SK-N-SH (cell line): ENCODE measurements at regions of chr5 and their contacts with region 1.

Region 1: DNA sequence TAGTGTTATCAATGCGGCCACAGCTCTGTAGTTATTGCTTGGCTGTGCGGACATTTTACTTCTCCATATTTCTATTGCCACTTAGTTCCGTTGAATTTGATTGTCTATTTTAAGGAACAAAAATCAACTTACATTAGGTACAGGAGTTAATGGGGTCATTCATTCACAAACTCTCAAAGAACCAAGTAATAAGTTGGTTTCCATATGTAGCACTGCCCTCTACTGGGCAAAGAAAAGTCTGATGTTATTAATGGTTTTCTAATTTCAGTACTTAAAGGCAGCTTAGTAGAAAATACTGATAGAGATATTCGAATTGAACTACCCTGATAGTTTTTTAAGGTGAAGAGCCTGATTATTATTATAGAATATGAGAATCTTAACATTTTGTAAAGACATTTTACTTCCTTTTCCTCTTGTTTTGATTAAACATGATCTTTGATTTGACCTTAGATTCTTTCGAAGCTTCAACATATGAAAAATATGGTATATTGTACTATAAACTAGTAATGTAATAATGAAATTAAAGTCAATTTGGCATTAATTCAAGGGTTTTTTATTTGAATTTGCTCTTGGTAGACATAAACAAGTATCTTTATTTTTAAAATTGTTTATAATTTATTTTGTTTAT is 119.5 kb upstream of the CTNND2 start:
- DNase-seq: peak; percentile 6
- H3K4me3 ChIP-seq: no peak overlapping the region
- H3K27ac ChIP-seq: no peak overlapping the region
- H3K4me1 ChIP-seq: no peaks in the 10 kb centered on the region
- H3K27me3 ChIP-seq: no peaks in the 10 kb centered on the region
- CTCF ChIP-seq: peak; percentile 81
- EP300 ChIP-seq: no peak
- RAD21 ChIP-seq: peak; percentile 61

Region 2: GRCh38 chr5:11903614-11904269 is 120.0 kb before region 1 on chr5:
- CTCF ChIA-PET with region 1: no interaction called
- POLR2A ChIA-PET with region 1: no interaction called
- DNase-seq: peak; percentile 68
- H3K4me3 ChIP-seq: peak overlapping the region; percentile 38 to 52; a peak in 2 of 4 replicates
- H3K27ac ChIP-seq: no peak overlapping the region
- H3K4me1 ChIP-seq: no peaks in the 10 kb centered on the region
- H3K27me3 ChIP-seq: peaks cover 26% of the 10 kb centered on the region
- CTCF ChIP-seq: no peak
- EP300 ChIP-seq: no peak
- RAD21 ChIP-seq: no peak

Region 3: GRCh38 chr5:12013351-12013750 is 10.4 kb before region 1 on chr5:
- CTCF ChIA-PET with region 1: interaction called, 22 read pairs
- POLR2A ChIA-PET with region 1: no interaction called
- DNase-seq: no peak
- H3K4me3 ChIP-seq: no peak overlapping the region
- H3K27ac ChIP-seq: no peak overlapping the region
- H3K4me1 ChIP-seq: no peaks in the 10 kb centered on the region
- H3K27me3 ChIP-seq: no peaks in the 10 kb centered on the region
- CTCF ChIP-seq: no peak
- EP300 ChIP-seq: no peak
- RAD21 ChIP-seq: no peak